ENCODE measurements at regions of chr1 and their contacts with region 1.

Region 1: DNA sequence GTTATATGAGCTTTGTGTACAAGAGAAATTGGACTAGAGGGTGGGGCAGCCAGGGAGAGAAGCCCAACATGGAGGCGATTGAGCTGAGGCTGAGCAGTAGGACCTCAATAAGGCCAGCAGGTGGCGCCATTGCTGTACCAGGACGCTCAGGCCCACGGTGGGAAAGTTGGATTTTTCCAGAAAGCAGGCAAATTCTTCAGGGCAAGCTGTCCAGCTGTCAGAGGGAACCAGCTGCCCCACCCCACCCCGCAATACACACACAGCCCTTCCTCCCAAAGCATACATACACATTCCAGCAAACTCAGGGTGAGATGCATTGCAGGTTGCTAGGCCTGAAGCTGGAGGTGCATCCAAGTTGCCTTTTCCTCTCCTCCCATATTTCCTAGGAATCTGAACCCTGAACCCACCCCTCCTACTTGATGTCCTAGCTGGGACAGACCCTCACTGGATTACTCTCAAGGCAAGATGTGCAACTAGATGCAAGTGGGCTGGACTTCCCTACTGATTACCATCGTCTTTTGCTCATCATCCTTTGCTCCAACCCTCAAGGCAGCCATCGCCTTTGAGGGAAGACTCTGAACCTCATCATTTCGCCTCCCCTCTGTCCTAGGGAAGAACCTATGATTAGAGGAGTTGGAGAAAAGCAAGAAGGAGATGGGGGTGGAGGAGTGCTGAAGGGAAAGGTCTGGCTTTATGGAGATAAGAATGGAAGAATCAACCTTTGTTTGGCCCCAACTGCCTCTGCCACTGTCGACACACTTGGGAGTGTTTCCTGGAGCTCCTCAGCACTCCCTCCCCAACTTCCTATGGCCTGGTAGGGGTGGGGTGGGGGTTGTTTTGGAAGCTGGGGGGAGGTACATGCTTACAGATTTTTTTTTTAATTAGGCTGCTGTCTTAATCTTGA is 25.5 kb downstream of the CD34 start:
- DNase-seq: peak; percentile 81
- H3K4me3 Mint-ChIP-seq: no peak overlapping the region
- H3K27ac Mint-ChIP-seq: peak overlapping the region; percentile 96
- H3K4me1 Mint-ChIP-seq: peaks cover 44% of the 10 kb centered on the region
- H3K27me3 Mint-ChIP-seq: peaks cover 22% of the 10 kb centered on the region

Region 2: GRCh38 chr1:207719234-207719633 is 166.1 kb before region 1 on chr1:
- CTCF ChIA-PET with region 1: no interaction called
- DNase-seq: no peak
- H3K4me3 Mint-ChIP-seq: no peak overlapping the region
- H3K27ac Mint-ChIP-seq: no peak overlapping the region
- H3K4me1 Mint-ChIP-seq: no peaks in the 10 kb centered on the region
- H3K27me3 Mint-ChIP-seq: no peaks in the 10 kb centered on the region

Region 3: DNA sequence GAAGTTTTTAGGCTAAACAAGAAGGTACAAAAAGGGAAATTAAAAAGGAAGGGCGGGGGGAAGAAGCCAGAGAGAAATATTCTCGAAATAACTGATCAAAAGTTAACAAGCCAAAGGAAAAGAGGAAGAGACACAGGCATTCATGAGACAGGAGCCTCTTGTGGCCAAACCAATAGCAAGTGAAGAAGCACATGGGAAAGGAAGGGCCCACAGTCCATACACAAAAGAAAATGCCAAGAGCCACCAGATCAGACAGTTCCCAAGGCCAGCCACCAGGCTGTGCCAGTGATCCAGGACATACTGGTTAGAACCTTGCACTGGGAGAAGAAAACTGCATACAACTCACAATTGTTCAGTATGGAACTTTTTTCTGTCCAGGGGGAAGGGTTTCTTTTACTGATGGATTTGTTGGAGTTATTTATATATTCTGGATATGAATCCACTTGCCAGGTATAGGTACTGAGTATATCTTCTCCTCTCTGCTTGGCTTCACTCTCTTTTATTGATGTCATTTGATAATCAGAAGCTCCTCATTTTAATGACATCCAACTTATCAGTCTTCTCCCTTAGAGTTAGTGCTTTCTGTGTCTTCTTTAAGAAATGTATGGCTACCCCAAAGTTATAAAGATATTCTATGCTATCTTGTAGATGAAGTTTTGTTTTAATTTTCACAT is 56.8 kb before region 1 on chr1:
- CTCF ChIA-PET with region 1: interaction called, 50 read pairs
- DNase-seq: peak; percentile 73
- H3K4me3 Mint-ChIP-seq: no peak overlapping the region
- H3K27ac Mint-ChIP-seq: peak overlapping the region; percentile 79
- H3K4me1 Mint-ChIP-seq: peaks cover 96% of the 10 kb centered on the region
- H3K27me3 Mint-ChIP-seq: peaks cover 6% of the 10 kb centered on the region

Region 4: GRCh38 chr1:207897188-207897587 is 11.8 kb after region 1 on chr1:
- CTCF ChIA-PET with region 1: interaction called, 51 read pairs
- DNase-seq: no peak
- H3K4me3 Mint-ChIP-seq: no peak overlapping the region
- H3K27ac Mint-ChIP-seq: no peak overlapping the region
- H3K4me1 Mint-ChIP-seq: peaks cover 13% of the 10 kb centered on the region
- H3K27me3 Mint-ChIP-seq: peaks cover 13% of the 10 kb centered on the region

Region 5: DNA sequence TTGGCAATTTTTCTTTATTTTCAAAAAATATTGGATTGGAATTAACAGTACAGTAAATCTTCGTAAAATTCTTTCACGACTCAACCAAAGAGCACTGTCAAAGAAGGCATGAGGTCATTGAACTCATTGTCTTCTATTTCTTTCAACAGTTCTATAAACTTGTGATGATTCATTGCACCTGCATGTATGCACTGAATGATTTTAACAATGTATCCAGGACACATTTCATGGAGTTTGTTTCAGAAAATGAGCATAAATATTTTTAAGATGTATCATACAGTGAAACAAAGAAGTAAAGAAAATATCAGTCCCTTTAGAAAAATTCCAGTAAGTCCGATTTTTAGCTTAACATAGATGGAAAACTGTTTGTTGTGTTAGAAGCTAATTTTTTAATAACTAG is 59.2 kb after region 1 on chr1:
- CTCF ChIA-PET with region 1: interaction called, 15 read pairs
- DNase-seq: no peak
- H3K4me3 Mint-ChIP-seq: no peak overlapping the region
- H3K27ac Mint-ChIP-seq: no peak overlapping the region
- H3K4me1 Mint-ChIP-seq: no peaks in the 10 kb centered on the region
- H3K27me3 Mint-ChIP-seq: peaks cover 33% of the 10 kb centered on the region

Region 6: GRCh38 chr1:207997486-207998268 is 112.3 kb after region 1 on chr1:
- CTCF ChIA-PET with region 1: interaction called, 41 read pairs
- DNase-seq: peak; percentile 69
- H3K4me3 Mint-ChIP-seq: no peak overlapping the region
- H3K27ac Mint-ChIP-seq: no peak overlapping the region
- H3K4me1 Mint-ChIP-seq: no peaks in the 10 kb centered on the region
- H3K27me3 Mint-ChIP-seq: peaks cover 27% of the 10 kb centered on the region